ENCODE measurements at regions of chr1 and their contacts with region 1.

Region 1: DNA sequence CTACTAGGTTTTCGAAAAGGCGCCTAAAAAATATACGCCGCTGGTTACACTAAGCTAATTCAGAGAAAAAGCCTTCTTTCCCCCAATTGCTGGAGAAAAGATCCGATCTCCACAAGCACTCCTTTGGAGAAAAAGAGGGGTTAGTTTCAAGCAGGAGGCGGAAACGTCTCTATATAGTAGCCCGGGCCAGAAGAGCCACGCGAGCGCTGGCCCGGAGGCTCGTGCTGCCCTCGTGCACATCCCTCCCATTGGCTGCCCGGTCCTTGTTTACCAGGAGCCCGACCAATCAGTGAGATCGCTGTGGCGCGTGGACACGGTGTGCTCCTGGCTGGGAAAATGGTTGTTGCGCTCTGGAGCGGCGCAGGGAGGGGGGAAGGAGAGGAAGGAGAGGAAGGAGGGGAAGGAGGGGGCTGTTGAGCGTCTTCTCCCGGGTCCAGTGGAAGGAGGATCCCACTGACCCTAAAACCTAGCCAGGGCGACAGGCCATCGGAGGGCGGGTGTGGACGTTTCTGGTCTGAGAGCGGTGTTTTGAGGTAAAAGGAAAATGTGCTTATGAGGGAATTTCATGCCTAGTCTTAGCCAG is at the start of gene TXNIP:
- DNase-seq: peak; percentile 76 to 86
- H3K4me3 ChIP-seq: peak within 1 kb of the TSS; percentile 89 to 96 (median 93)
- H3K27ac ChIP-seq: peak within 1 kb of the TSS; percentile 65
- H3K4me1 ChIP-seq: peaks cover 2 to 8% (median 6%) of the 10 kb centered on the region in 4 experiments; a peak in 4 of 7 replicates
- H3K27me3 ChIP-seq: no peaks in the 10 kb centered on the region
- CTCF ChIP-seq: no peak
- EP300 ChIP-seq: peak in 1 of 2 experiments; percentile 44; a peak in 1 of 3 replicates
- POLR2A ChIP-seq: peak; percentile 89 to 90
- RAD21 ChIP-seq: no peak
- total RNA-seq, gene TXNIP: 10.3 and 12.3 TPM in 2 replicates

Region 2: GRCh38 chr1:145901318-145902021 is 95.1 kb before region 1 on chr1:
- CTCF ChIA-PET with region 1: no interaction called
- POLR2A ChIA-PET with region 1: no interaction called
- DNase-seq: no peak
- H3K4me3 ChIP-seq: no peak overlapping the region
- H3K27ac ChIP-seq: no peak overlapping the region
- H3K4me1 ChIP-seq: no peaks in the 10 kb centered on the region
- H3K27me3 ChIP-seq: no peaks in the 10 kb centered on the region; a peak in 1 of 7 replicates
- CTCF ChIP-seq: peak; percentile 47 to 56 (median 49)
- EP300 ChIP-seq: no peak
- POLR2A ChIP-seq: no peak
- RAD21 ChIP-seq: peak in 1 of 2 experiments; percentile 39; a peak in 2 of 4 replicates

Region 3: GRCh38 chr1:146007506-146008133 is 11.1 kb after region 1 on chr1:
- CTCF ChIA-PET with region 1: interaction called, 17 read pairs
- POLR2A ChIA-PET with region 1: interaction called, 9 read pairs
- DNase-seq: no peak
- H3K4me3 ChIP-seq: no peak overlapping the region
- H3K27ac ChIP-seq: no peak overlapping the region
- H3K4me1 ChIP-seq: no peaks in the 10 kb centered on the region; a peak in 1 of 7 replicates
- H3K27me3 ChIP-seq: no peaks in the 10 kb centered on the region
- CTCF ChIP-seq: no peak
- EP300 ChIP-seq: no peak
- POLR2A ChIP-seq: no peak
- RAD21 ChIP-seq: no peak